ENCODE measurements at regions of chr7 and their contacts with region 1.

Region 1: GRCh38 chr7:27576360-27576944 is 86.2 kb downstream of the HIBADH start:
- DNase-seq: no peak
- ATAC-seq: peak; percentile 42 to 61

Region 2: GRCh38 chr7:27204851-27205337 is 371.6 kb before region 1 on chr7:
- intact Hi-C with region 1: loop called (anchors 5 to 10 kb)
- DNase-seq: no peak
- ATAC-seq: no peak